ENCODE measurements at regions of chr3 and their contacts with region 1.

Region 1: DNA sequence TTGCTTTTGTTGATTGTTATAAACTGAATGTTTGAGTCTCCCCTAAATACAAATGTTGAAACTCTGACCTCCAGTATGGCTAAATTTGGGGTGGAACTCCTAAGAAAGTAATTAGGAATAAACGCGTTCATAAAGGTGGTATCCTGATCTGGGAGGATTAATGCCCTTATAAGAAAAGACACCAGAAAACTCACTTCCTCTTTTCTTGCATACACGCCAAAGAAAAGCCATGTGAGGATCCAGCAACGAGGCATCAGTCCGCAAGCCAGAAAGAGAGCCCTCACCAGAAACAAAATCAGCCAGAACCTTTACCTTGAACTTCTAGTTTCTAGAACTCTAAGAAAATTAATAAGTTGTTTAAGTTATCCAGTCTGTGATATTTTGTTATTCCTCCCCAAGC is 37.4 kb upstream of the AZI2 start:
- DNase-seq: no peak
- H3K4me3 ChIP-seq: no peak overlapping the region
- CTCF ChIP-seq: no peak
- POLR2A ChIP-seq: no peak

Region 2: GRCh38 chr3:28726840-28727239 is 340.8 kb after region 1 on chr3:
- intact Hi-C with region 1: loop called (anchors 10 kb)
- DNase-seq: no peak
- H3K4me3 ChIP-seq: no peak overlapping the region
- CTCF ChIP-seq: no peak
- POLR2A ChIP-seq: no peak

Region 3: GRCh38 chr3:29128001-29128400 is 742.0 kb after region 1 on chr3:
- intact Hi-C with region 1: no loop called
- DNase-seq: no peak
- H3K4me3 ChIP-seq: no peak overlapping the region
- CTCF ChIP-seq: no peak
- POLR2A ChIP-seq: no peak

Measured in lower leg skin (tissue), 4 donors.